A549 (cell line): ENCODE measurements at regions of chr2 and their contacts with region 1.

Region 1: DNA sequence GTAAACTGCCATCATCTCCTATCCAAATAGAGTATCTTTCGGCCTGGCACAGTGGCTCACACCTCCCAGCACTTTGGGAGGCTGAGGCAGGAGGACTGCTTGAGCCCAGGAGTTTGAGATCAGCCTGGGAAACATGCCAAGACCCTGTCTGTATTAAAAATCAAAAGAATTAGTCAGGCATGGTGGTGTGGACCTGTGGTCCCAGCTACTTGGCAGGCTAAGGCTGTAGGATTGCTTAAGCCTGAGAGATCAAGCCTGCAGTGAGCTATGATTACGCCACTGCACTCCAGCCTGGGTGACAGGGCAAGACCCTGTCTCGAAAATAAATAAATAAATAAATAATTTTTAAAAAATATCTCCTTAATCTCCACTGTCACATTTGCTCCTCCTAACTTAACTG is 14.7 kb upstream of the ARPC2 start:
- DNase-seq: no peak
- ATAC-seq: no peak
- H3K4me3 ChIP-seq: no peak overlapping the region
- H3K27ac ChIP-seq: no peak overlapping the region
- H3K4me1 ChIP-seq: no peaks in the 10 kb centered on the region
- CTCF ChIP-seq: no peak
- EP300 ChIP-seq: no peak
- POLR2A ChIP-seq: no peak
- RAD21 ChIP-seq: no peak

Region 2: DNA sequence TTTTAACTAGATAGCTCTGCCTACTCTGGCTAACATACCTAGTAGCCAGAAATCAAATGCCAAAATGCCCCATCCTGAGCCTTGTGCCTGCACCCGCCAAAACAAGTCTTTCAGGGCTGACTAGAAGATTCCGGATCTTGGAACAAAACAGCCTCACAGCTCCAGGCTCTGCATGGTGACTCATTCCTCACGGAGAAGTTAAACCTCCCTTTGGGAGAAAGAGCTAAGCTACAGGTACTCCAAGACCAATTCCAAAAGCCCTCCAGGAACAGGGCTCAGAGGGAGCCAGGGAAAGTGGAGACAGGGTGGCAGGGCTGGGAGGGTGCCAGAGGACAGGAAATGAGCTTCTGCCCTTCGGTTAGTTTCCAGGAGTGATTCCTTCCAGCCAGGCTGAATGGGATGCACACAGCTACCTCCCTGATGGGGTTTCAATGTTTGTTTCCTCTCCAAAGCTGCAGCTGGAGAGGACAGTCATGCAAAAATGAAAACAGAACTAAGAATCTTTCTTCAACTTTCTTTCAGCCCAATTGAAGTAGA is 495.1 kb before region 1 on chr2:
- CTCF ChIA-PET with region 1: no interaction called
- POLR2A ChIA-PET with region 1: no interaction called
- DNase-seq: no peak
- ATAC-seq: no peak
- H3K4me3 ChIP-seq: no peak overlapping the region
- H3K27ac ChIP-seq: no peak overlapping the region
- H3K4me1 ChIP-seq: no peaks in the 10 kb centered on the region
- CTCF ChIP-seq: no peak
- EP300 ChIP-seq: no peak
- POLR2A ChIP-seq: no peak
- RAD21 ChIP-seq: no peak

Region 3: GRCh38 chr2:218229239-218229638 is 27.0 kb after region 1 on chr2:
- CTCF ChIA-PET with region 1: no interaction called
- POLR2A ChIA-PET with region 1: interaction called, 10 read pairs
- DNase-seq: peak in 1 of 2 experiments; percentile 23
- ATAC-seq: peak in 1 of 2 experiments; percentile 60; a peak in 3 of 6 replicates
- H3K4me3 ChIP-seq: no peak overlapping the region
- H3K27ac ChIP-seq: 0 out of 6 replicates have a peak overlapping the region, but pooled peaks of 1 of the 2 experiments have one; percentile 12
- H3K4me1 ChIP-seq: peaks cover 29% of the 10 kb centered on the region
- CTCF ChIP-seq: no peak
- EP300 ChIP-seq: no peak
- POLR2A ChIP-seq: no peak
- RAD21 ChIP-seq: no peak